OCI-LY7 (cell line): ENCODE measurements at regions of chr7 and their contacts with region 1.

Region 1: DNA sequence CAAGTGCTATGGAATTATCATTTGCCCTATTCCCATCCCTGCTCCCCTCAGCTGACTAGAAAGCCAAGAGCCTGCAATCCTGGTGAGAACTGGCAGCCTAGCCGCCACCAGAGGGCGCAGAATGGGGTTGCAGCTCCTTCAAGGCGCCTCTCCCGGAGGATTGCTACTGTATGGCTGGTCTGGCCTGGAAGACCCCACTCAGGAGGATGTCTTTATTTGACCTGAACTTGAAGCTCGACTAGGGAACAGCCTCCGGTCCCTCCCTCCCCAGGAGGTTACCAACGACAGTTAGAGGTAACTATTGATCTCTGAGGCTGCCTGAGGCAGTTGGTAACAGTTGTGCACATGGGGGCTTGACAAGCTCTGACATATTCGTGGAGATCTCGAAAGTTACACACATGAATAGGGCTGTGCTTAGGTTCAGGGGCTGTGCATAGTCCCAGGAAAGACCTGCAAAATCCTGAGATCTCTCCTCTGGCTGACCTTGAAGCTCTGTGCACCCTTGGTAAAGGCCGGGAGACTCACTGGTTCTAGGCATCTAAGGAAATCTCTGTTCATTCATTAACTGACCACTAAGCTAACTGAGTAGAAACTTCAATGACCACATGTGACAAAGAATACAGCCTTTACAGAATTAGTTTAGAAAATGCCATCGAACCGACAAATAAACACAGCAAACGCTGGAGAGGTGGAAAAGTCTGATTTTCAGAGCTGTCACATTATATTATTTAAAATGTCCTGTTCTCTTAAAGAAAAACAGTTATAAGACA is 65.7 kb downstream of the TSPAN12 start:
- DNase-seq: peak; percentile 62
- H3K4me3 ChIP-seq: no peak overlapping the region
- H3K27ac ChIP-seq: no peak overlapping the region
- H3K4me1 ChIP-seq: no peaks in the 10 kb centered on the region
- CTCF ChIP-seq: peak; percentile 93

Region 2: GRCh38 chr7:120819863-120820262 is 27.6 kb after region 1 on chr7:
- CTCF ChIA-PET with region 1: no interaction called
- POLR2A ChIA-PET with region 1: no interaction called
- intact Hi-C with region 1: no loop called
- DNase-seq: no peak
- H3K4me3 ChIP-seq: no peak overlapping the region
- H3K27ac ChIP-seq: no peak overlapping the region
- H3K4me1 ChIP-seq: no peaks in the 10 kb centered on the region
- CTCF ChIP-seq: no peak

Region 3: DNA sequence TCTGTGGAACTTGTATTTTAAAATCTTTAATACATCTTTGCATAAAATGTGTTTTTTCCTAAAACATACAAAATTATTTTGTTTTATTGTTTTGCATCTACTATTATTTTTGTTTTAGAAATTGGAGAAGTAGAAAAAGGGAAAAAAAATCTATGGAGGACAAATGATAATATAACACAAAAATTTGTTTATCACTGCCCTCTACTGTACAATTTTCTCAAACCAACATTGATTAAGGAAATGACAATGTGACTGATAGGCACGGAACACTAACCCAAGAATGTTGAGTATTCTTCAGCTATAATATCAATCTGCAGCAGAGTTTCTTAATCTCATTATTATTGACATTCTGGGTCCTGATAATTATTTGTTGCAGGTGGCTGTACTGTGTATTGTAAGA is 148.8 kb after region 1 on chr7:
- CTCF ChIA-PET with region 1: no interaction called
- POLR2A ChIA-PET with region 1: no interaction called
- intact Hi-C with region 1: loop called (anchors 5 kb)
- DNase-seq: peak; percentile 6
- H3K4me3 ChIP-seq: no peak overlapping the region
- H3K27ac ChIP-seq: no peak overlapping the region
- H3K4me1 ChIP-seq: no peaks in the 10 kb centered on the region
- CTCF ChIP-seq: peak; percentile 66

Region 4: GRCh38 chr7:121081327-121081936 is 289.2 kb after region 1 on chr7:
- CTCF ChIA-PET with region 1: no interaction called
- POLR2A ChIA-PET with region 1: no interaction called
- intact Hi-C with region 1: loop called (anchors 5 kb)
- DNase-seq: peak; percentile 51
- H3K4me3 ChIP-seq: no peak overlapping the region
- H3K27ac ChIP-seq: no peak overlapping the region
- H3K4me1 ChIP-seq: no peaks in the 10 kb centered on the region
- CTCF ChIP-seq: peak; percentile 87

Region 5: GRCh38 chr7:121107923-121108498 is 315.7 kb after region 1 on chr7:
- CTCF ChIA-PET with region 1: no interaction called
- POLR2A ChIA-PET with region 1: no interaction called
- intact Hi-C with region 1: loop called (anchors 5 kb)
- DNase-seq: peak; percentile 67
- H3K4me3 ChIP-seq: no peak overlapping the region
- H3K27ac ChIP-seq: no peak overlapping the region
- H3K4me1 ChIP-seq: no peaks in the 10 kb centered on the region
- CTCF ChIP-seq: peak; percentile 97